ENCODE measurements at regions of chr5 and their contacts with region 1.

Region 1: GRCh38 chr5:143824851-143825720 is 13.1 kb downstream of the HMHB1 start:
- DNase-seq: peak; percentile 68
- ATAC-seq: peak; percentile 100
- H3K4me3 ChIP-seq: no peak overlapping the region
- H3K27ac ChIP-seq: no peak overlapping the region
- H3K4me1 ChIP-seq: peaks cover 14% of the 10 kb centered on the region; the same call in 1 of the 2 replicates
- H3K27me3 ChIP-seq: no peaks in the 10 kb centered on the region; a peak in 1 of 5 replicates
- CTCF ChIP-seq: peak; percentile 97
- EP300 ChIP-seq: no peak
- POLR2A ChIP-seq: no peak
- RAD21 ChIP-seq: peak; percentile 97

Region 2: DNA sequence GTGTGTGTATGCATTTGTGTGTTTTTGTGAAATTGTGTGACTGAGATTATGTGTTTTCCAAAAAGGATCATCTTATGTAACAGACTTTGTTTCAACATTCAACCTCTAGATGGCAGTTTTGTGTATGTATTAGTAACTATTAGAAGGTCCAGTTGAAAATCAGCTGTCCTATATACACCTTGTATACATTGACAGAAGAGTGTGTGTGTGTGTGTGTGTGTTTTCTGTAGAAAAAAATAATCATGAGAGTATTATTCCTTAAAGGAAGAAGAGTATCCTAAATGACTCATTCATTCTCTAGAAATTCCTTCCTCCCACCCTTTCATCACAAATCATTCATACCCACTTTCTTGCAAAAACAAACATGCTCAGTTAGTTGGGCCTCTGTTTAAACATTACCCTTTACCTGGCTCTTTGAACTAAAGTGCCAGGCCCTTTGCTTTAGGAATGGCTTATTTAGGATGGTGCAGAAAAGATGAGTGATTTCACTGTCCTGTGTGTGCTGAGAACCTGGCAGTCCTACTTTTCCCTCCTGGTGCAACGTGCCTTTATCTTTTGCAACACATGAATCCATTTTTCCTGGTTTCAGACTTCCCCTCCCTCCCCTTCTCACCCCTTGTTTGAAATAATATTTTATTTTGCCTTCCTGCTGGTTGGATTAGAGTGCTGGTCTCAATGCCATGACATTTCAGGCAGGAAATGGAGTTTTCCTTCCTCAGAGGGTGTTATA is 902.7 kb before region 1 on chr5:
- CTCF ChIA-PET with region 1: no interaction called
- POLR2A ChIA-PET with region 1: no interaction called
- in situ Hi-C with region 1: no loop called
- intact Hi-C with region 1: loop called (anchors 5 kb)
- DNase-seq: peak; percentile 95
- ATAC-seq: peak; percentile 95
- H3K4me3 ChIP-seq: no peak overlapping the region
- H3K27ac ChIP-seq: peak overlapping the region; percentile 66
- H3K4me1 ChIP-seq: peaks cover 37% of the 10 kb centered on the region
- H3K27me3 ChIP-seq: no peaks in the 10 kb centered on the region
- CTCF ChIP-seq: peak; percentile 65
- EP300 ChIP-seq: peak in 1 of 2 experiments; percentile 91; a peak in 2 of 4 replicates
- POLR2A ChIP-seq: no peak
- RAD21 ChIP-seq: no peak

Region 3: DNA sequence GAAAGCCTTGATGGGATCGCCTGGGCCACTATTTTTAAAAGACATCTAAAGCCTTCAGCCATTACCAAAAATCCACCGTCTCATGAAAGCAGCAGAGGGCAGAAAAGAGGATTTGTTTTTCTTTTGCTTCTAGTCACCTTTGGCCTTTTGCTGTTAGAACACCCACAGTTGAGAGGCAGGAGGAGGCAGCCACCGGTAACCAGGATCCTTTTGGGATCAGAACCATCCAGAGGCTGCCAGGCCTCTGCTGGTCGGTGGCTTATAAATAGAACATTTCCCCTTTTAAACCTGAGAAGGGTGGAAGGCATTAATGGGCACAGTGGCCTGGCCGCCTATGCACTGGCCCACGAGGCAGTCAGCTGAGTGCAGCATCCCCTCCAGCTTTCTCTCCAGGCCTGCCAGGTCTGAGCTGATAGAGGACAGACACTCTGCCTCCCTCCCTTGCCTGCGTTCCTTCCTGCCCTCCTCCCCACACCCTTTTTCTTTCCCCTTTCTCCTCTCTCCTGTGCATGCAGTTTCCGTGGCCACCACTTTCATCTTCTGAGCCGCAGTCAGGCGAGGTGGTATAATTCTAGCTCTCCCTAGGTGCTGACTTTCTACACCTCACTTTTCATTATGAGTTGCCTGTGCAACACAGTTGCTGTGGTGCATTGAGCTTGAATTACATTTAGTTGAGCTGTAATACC is 801.5 kb before region 1 on chr5:
- CTCF ChIA-PET with region 1: no interaction called
- POLR2A ChIA-PET with region 1: no interaction called
- in situ Hi-C with region 1: loop called (anchors 10 kb)
- intact Hi-C with region 1: no loop called
- DNase-seq: no peak
- ATAC-seq: peak; percentile 46
- H3K4me3 ChIP-seq: no peak overlapping the region
- H3K27ac ChIP-seq: no peak overlapping the region
- H3K4me1 ChIP-seq: peaks cover 11% of the 10 kb centered on the region
- H3K27me3 ChIP-seq: no peaks in the 10 kb centered on the region
- CTCF ChIP-seq: 0 out of 2 replicates have a peak, but pooled peaks have one; percentile 5
- EP300 ChIP-seq: no peak
- POLR2A ChIP-seq: no peak
- RAD21 ChIP-seq: no peak

Region 4: DNA sequence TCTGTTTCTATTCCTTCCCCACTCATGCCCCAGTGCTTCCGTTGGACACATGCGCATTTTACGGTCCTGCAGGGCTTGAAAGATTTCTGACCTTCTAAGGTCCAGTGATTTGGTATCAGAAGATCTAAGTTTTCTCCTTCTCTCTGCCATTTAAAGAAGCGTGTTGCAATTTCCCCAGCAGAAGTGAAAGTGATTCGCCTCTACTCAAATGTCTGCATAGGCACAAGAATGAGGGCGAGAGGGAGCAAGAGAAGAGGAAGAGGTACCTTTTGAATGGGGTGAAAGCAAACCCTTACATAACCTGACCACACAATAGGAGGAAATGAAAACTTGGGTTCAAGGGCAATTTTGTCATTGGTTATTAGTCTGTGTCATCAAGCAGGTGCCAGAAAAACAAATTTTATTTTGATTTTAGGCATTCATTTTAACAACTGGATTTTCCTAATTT is 389.9 kb before region 1 on chr5:
- CTCF ChIA-PET with region 1: no interaction called
- POLR2A ChIA-PET with region 1: no interaction called
- in situ Hi-C with region 1: loop called (anchors 25 kb)
- intact Hi-C with region 1: no loop called
- DNase-seq: no peak
- ATAC-seq: no peak
- H3K4me3 ChIP-seq: peak overlapping the region in 2 of 3 experiments; percentile 25 to 35; a peak in 3 of 6 replicates
- H3K27ac ChIP-seq: no peak overlapping the region
- H3K4me1 ChIP-seq: peaks cover 32% of the 10 kb centered on the region
- H3K27me3 ChIP-seq: peaks cover 0 to 6% of the 10 kb centered on the region in 2 experiments; a peak in 3 of 5 replicates
- CTCF ChIP-seq: no peak
- EP300 ChIP-seq: no peak
- POLR2A ChIP-seq: no peak
- RAD21 ChIP-seq: no peak

Region 5: DNA sequence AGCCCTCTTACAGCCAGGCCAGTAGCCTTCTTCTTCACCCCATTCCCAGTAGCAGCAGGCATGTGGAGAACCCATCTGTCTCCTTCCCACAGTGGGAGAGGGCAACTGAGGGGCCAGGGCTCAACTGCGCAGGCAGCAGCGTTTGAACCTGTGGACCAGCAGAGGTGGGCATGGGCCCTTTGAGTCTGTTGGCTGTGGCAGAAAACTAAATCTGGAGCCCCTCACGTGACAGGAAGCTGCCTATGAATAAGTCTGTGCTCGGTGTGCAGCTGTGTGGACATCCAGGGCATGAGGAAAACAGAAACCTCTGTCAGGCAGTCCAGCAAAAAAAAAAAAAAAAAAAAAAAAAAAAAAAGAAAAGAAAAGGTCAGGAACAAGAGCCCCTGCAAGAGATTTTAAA is 232.4 kb before region 1 on chr5:
- CTCF ChIA-PET with region 1: no interaction called
- POLR2A ChIA-PET with region 1: no interaction called
- in situ Hi-C with region 1: no loop called
- intact Hi-C with region 1: loop called (anchors 10 kb)
- DNase-seq: no peak
- ATAC-seq: no peak
- H3K4me3 ChIP-seq: no peak overlapping the region
- H3K27ac ChIP-seq: peak overlapping the region; percentile 39
- H3K4me1 ChIP-seq: peaks cover 86% of the 10 kb centered on the region
- H3K27me3 ChIP-seq: no peaks in the 10 kb centered on the region
- CTCF ChIP-seq: no peak
- EP300 ChIP-seq: no peak
- POLR2A ChIP-seq: no peak
- RAD21 ChIP-seq: no peak